PC-3 (cell line): ENCODE measurements at regions of chr9 and their contacts with region 1.

Region 1: GRCh38 chr9:100222674-100223073 is 123.6 kb downstream of the INVS start:
- DNase-seq: peak; percentile 33
- ATAC-seq: no peak
- H3K4me3 ChIP-seq: no peak overlapping the region
- H3K27ac ChIP-seq: no peak overlapping the region
- H3K4me1 ChIP-seq: no peaks in the 10 kb centered on the region
- H3K27me3 ChIP-seq: no peaks in the 10 kb centered on the region
- CTCF ChIP-seq: peak; percentile 57

Region 2: GRCh38 chr9:100098887-100099721 is 123.6 kb before region 1 on chr9 and contains the starts of genes ERP44 and INVS:
- CTCF ChIA-PET with region 1: no interaction called
- POLR2A ChIA-PET with region 1: no interaction called
- intact Hi-C with region 1: loop called (anchors 10 kb)
- DNase-seq: peak; percentile 97
- ATAC-seq: peak; percentile 93
- H3K4me3 ChIP-seq: peak within 1 kb of the TSS; percentile 99
- H3K27ac ChIP-seq: peak within 1 kb of the TSS; percentile 71
- H3K4me1 ChIP-seq: peaks cover 28% of the 10 kb centered on the region
- H3K27me3 ChIP-seq: no peaks in the 10 kb centered on the region
- CTCF ChIP-seq: no peak
- total RNA-seq, gene ERP44: 5.8 and 7.7 TPM in 2 replicates
- total RNA-seq, gene INVS: 8.9 and 9.6 TPM in 2 replicates

Region 3: GRCh38 chr9:100150214-100150613 is 72.5 kb before region 1 on chr9:
- CTCF ChIA-PET with region 1: interaction called, 11 read pairs
- POLR2A ChIA-PET with region 1: no interaction called
- intact Hi-C with region 1: no loop called
- DNase-seq: peak; percentile 12
- ATAC-seq: no peak
- H3K4me3 ChIP-seq: no peak overlapping the region
- H3K27ac ChIP-seq: no peak overlapping the region
- H3K4me1 ChIP-seq: no peaks in the 10 kb centered on the region
- H3K27me3 ChIP-seq: no peaks in the 10 kb centered on the region
- CTCF ChIP-seq: no peak